IMR-90 (cell line): ENCODE measurements at regions of chr2 and their contacts with region 1.

Region 1: DNA sequence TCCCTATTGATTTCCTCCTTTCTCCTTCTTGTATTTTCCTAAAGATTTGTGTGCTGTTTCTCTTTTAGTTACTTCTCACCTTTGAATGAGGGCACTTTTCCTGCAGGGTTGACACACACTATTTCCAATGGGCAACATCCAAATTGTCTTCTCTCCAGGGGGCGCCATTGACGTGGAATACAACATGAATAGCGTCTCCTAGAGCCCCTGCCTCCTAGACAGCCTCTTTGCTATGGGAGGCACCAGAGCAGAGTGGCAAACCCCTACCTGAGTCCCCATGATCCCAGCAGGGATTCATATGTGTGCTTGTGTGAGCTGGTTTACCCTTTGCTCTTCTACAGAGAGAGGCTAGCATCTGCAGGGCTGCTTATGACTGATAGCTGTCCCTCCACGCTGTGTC is 61.3 kb upstream of the ITSN2 start:
- DNase-seq: peak; percentile 24
- ATAC-seq: peak; percentile 74
- H3K4me3 ChIP-seq: no peak overlapping the region
- H3K27ac ChIP-seq: no peak overlapping the region
- H3K4me1 ChIP-seq: no peaks in the 10 kb centered on the region
- H3K27me3 ChIP-seq: peaks cover 7% of the 10 kb centered on the region
- CTCF ChIP-seq: peak; percentile 55
- POLR2A ChIP-seq: no peak
- RAD21 ChIP-seq: peak; percentile 67

Region 2: GRCh38 chr2:24613154-24613814 is 191.6 kb after region 1 on chr2:
- CTCF ChIA-PET with region 1: no interaction called
- POLR2A ChIA-PET with region 1: no interaction called
- dilution Hi-C with region 1: no loop called
- in situ Hi-C with region 1: no loop called
- intact Hi-C with region 1: loop called (anchors 5 kb)
- DNase-seq: peak; percentile 76
- ATAC-seq: peak; percentile 93
- H3K4me3 ChIP-seq: no peak overlapping the region
- H3K27ac ChIP-seq: no peak overlapping the region
- H3K4me1 ChIP-seq: no peaks in the 10 kb centered on the region
- H3K27me3 ChIP-seq: no peaks in the 10 kb centered on the region
- CTCF ChIP-seq: peak; percentile 56
- POLR2A ChIP-seq: no peak
- RAD21 ChIP-seq: peak; percentile 61

Region 3: DNA sequence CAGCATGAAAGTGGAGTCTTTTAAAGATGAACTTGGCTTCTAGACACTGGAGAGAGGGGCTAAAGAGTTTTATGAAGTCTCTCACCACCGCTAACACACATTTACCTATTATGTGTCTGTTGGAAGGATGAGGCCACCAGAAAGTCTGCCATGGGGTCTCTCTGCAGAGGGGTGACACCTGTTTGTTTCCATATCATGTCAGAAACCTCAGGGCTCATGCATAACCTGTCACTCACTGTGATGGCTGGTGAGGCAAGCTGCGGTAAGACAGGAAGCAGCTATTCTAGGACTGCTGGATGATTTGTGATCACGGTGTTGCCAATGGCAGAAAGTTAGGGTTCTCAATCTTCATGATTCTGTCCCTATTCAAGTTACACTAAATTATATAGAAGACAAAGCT is 980.8 kb after region 1 on chr2:
- CTCF ChIA-PET with region 1: no interaction called
- POLR2A ChIA-PET with region 1: no interaction called
- dilution Hi-C with region 1: no loop called
- in situ Hi-C with region 1: no loop called
- intact Hi-C with region 1: no loop called
- DNase-seq: no peak
- ATAC-seq: no peak
- H3K4me3 ChIP-seq: no peak overlapping the region
- H3K27ac ChIP-seq: no peak overlapping the region
- H3K4me1 ChIP-seq: peaks cover 2% of the 10 kb centered on the region; the same call in 1 of the 2 replicates
- H3K27me3 ChIP-seq: no peaks in the 10 kb centered on the region
- CTCF ChIP-seq: no peak
- POLR2A ChIP-seq: no peak
- RAD21 ChIP-seq: no peak